ENCODE measurements at regions of chr11 and their contacts with region 1.

Region 1: DNA sequence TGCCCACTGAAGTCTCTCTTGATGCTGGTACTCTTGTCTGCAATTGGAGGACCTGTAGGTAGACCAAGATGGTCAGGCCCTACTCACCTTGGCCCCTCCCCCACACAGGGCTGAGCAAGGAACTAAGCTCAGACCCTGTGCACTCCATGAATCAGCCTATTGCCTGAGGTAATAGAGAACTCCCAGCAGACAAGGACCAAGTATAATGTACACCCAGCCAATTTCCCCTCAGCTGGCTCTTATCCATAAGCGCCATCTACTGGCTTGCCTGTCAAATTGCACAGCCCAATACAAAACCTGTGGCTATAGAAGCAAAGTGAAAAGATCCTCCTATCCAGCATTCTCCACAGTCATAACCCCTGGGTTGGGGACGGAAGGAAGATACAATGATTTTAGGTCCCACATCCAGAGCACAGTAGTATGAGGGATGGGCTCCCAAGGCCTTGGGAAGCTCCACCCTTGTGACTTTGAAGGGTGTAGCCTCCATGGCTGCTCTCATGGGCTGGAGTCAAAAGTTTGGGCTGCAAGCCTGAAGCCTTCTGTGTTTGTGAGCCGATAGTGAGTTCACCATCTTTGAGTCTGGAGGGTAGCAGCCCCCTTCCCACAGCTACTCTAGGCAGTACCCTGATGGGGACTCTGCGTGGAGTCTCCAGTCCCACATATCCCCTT is 56.0 kb downstream of the GLYATL2 start:
- DNase-seq: peak; percentile 78
- H3K4me3 ChIP-seq: no peak overlapping the region
- H3K27ac ChIP-seq: no peak overlapping the region
- H3K4me1 ChIP-seq: no peaks in the 10 kb centered on the region
- H3K27me3 ChIP-seq: no peaks in the 10 kb centered on the region
- CTCF ChIP-seq: peak; percentile 98

Region 2: DNA sequence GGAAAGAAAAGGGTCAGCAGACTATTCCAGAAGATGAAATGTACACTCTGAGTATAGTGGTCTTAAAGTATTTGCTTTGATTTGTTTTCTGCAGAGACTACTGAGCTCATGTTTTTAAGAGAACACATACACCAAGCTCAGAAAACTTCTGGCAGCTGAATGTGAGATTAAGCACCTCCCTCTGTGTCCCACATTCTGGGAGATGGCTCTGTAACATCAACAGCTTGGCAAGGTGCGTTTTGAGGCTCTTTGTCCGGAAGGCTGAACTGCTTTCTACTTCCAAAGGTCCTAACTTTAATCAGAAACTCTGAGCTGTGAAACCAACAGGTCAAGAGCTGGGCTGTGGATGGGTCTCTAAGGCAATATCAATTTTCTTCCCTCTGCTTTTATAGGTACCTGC is 20.4 kb before region 1 on chr11:
- CTCF ChIA-PET with region 1: no interaction called
- POLR2A ChIA-PET with region 1: interaction called, 11 read pairs
- intact Hi-C with region 1: no loop called
- DNase-seq: no peak
- H3K4me3 ChIP-seq: no peak overlapping the region
- H3K27ac ChIP-seq: no peak overlapping the region
- H3K4me1 ChIP-seq: no peaks in the 10 kb centered on the region
- H3K27me3 ChIP-seq: no peaks in the 10 kb centered on the region
- CTCF ChIP-seq: no peak

Measured in A673 (cell line).